ENCODE measurements at regions of chr3 and their contacts with region 1.

Region 1: DNA sequence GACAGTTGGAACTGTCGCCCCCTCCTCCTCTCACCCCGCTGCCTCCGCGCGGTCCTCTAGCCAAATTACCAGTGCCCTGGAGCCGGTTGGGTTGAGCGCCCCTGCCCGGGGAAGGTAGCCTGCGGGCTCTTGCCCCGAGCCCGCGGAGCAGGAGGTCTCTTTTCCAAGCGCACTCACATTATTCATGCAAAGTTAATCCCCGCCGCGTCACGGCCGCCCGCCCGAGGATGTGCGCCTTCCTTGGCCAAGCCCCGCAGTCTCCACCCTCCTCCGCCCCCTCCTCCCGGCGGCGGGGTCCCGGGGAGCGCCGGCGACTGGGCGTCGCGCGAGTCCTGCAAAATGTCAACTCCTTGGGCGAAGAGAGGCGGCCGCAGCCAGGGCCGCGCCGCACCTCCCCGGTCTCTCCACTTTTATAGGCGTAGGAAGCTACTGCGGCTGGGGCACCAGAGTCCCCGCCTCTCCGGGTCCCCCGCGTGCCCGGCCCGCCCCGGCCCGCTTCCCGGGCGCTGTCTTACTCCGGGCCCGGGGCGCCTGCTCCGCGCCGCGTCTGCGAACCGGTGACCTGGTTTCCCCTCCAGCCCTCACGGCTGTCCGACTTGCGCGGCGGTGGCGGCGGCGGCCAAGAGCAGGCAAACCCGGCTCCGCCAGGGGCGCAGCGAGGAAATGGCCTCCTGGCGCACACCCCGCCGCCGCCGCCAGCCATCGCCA is at the start of gene THRB:
- DNase-seq: peak; percentile 51
- CTCF ChIP-seq: no peak

Region 2: DNA sequence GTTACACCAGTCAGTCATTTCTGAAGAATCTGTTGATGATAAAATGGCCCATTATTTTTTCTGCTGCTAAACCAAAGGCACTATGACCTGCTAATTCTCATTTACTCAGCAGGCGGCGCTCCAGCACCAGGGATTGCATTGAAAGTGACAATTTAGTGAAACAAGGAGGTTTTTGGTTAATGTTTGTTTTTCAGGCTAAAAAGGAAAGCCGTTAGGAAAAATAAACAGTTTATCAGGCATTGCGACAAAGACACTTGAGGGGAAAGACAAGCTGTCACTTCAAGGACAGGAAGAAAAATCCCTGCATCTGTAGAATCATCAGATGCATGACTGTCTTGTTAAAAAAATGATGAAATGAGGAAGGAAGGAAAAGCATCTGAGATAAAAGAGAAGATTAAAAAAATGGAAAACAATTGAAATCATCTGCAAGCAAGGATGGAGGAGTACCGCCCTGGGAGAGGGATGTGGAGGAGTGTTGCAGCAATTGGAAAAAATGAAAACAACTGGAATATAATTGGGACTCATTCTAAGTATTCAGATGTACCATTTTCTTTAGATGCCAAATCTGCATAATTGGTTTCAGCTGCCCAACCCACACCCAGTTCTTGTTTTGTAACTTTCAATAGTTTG is 495.6 kb before region 1 on chr3:
- in situ Hi-C with region 1: loop called (anchors 25 kb)
- DNase-seq: peak; percentile 52
- CTCF ChIP-seq: peak; percentile 84

Region 3: DNA sequence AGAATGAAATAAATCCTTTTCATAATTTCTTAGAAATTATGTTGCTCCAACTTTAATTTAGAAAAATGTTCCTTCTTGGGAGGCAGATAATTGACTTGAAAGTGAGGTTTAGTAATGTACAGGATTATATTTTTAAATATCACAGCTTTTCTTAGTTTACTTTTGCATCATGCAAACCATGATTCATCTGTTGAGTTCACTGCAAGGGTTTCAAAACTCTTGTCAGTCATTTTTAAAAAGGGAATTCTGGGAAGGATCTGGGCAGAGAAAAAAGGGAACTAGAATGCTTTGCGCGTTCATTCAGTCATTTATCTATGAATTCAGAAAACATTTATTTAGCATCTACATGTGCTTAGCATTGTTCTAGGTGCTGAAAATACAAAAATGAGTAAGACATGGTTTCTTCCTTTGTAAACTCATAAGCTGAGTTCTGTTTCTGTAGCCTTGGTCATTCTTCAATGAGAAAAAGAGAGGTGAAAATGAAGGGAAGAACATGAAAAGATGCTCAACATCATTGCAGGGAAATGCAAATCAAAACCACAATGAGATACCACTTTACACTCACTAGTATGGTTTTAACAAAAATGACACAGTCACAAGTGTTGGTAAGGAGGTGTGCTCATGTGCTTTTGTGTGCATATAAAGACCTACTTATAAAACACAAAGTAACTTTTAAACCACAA is 340.6 kb before region 1 on chr3:
- in situ Hi-C with region 1: no loop called
- DNase-seq: no peak
- CTCF ChIP-seq: no peak

Region 4: DNA sequence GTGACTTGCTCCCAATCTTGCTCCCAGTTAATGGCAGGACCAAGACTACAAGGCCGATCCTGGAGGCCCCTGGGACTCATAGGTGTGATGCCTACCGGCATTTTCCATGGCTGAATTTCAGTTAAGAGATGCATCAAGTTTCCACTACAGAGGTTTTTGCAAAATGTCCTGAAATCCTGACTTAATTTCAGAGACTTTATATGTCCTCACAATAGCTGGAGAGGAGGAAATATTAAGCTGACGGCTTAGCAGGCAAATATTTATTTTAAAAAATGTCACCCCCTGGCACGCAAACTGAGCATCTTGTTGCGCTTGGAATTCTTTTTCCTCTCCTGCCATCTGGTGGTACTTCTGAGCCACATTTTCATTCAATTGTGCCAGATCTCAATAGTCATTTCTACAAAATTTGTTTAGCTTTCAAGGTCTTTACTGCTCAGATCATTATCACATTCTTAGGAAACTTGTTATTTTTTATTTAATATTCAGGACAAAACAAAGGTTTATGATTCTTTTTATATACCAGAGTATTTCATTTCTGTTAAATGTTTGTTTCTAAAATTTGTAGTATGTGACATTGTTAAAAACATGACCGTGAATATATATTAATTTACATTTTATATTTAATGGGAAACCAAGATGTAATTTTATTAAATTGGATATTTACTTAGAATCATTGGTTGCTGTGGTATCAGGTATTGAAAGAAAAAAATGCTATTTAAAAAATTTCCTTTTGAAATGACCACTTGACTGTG is 189.0 kb after region 1 on chr3:
- in situ Hi-C with region 1: no loop called
- DNase-seq: no peak
- CTCF ChIP-seq: no peak